ENCODE measurements at regions of chr10 and their contacts with region 1.

Region 1: DNA sequence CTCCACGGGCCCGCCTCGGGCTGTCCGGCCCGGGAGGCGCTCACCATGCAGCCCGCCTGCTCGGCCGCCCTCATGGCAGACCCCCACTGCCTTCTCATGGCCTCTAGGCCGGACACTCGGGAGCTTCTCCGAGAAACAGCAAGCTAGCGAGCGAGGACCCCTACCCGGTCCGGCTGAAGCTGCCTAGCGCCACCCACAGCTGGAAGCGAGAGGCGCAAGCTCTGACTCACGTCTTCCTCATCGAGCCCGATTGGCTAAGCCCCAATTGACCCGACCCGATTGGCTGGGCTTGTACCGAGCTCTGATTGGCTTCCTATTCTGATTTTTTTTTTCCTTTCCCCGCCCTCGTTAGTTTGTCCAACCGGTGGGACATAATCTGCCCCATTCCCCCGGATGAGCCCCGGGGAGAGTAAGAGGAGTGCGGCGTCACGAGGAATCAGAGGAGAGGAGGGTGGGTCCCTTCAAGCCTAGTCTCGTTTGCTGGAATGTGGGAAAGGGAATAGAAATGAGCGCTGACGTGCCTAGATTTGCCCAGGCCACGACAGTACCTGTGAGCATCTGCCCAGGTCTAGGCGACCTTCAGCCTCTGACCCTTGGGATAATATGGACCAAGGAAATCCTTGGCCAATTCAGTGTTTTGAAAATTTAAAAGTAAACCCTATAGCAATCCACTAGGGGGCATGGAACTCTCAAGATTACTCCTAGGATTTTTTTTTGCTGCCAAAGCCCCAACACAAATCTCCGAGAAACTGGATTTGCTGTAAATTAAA is at the start of gene TYSND1:
- DNase-seq: peak; percentile 97
- ATAC-seq: peak; percentile 92
- H3K4me3 Mint-ChIP-seq: peak within 1 kb of the TSS; percentile 83
- H3K27ac Mint-ChIP-seq: peak within 1 kb of the TSS; percentile 93
- H3K4me1 Mint-ChIP-seq: peaks cover 32% of the 10 kb centered on the region
- H3K27me3 Mint-ChIP-seq: no peaks in the 10 kb centered on the region
- total RNA-seq, gene TYSND1: 11.5 to 14.9 TPM

Region 2: GRCh38 chr10:70115948-70116682 is 30.6 kb before region 1 on chr10:
- CTCF ChIA-PET with region 1: interaction called, 20 read pairs
- POLR2A ChIA-PET with region 1: no interaction called
- intact Hi-C with region 1: loop called in 1 of 2 experiments (anchors 1 kb)
- DNase-seq: peak; percentile 71
- ATAC-seq: peak; percentile 88
- H3K4me3 Mint-ChIP-seq: no peak overlapping the region
- H3K27ac Mint-ChIP-seq: no peak overlapping the region
- H3K4me1 Mint-ChIP-seq: peaks cover 4% of the 10 kb centered on the region
- H3K27me3 Mint-ChIP-seq: no peaks in the 10 kb centered on the region

Region 3: DNA sequence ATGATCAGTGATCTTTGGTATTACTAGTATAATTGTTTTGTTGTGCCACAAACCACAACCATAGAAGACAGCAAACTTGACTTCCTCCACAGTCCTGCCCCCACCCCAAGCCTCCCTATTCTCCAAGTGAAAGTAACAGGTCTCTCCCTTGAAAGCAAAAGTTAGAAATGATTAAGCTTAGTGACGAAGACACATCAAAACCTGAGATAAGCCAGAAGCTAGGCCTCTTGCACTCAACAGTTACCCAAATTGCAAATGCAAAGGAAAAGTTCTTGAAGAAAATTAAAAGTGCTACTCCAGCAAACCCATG is 16.2 kb after region 1 on chr10:
- CTCF ChIA-PET with region 1: interaction called, 74 read pairs
- POLR2A ChIA-PET with region 1: interaction called, 18 read pairs
- intact Hi-C with region 1: loop called (anchors 1 kb)
- DNase-seq: peak; percentile 84
- ATAC-seq: peak; percentile 87
- H3K4me3 Mint-ChIP-seq: peak overlapping the region; percentile 60
- H3K27ac Mint-ChIP-seq: peak overlapping the region; percentile 90
- H3K4me1 Mint-ChIP-seq: peaks cover 74% of the 10 kb centered on the region
- H3K27me3 Mint-ChIP-seq: no peaks in the 10 kb centered on the region

Region 4: DNA sequence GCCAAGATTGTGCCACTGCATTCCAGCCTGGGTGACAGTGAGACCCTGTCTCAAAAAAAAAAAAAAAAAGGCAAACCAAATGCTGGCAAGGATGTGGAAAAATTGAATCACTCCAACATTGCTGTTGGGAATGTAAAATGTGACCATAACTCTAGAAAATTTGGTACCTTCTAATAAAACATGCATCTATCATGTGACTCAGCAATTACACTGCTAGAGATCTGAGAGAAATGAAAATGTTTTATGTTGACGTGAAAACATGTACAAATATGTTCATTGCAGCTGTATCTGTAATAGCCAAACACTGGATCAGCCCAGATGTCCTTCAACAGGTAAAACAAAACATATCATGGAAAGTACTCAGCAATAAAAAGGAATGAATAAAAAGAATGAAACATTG is 54.4 kb after region 1 on chr10:
- CTCF ChIA-PET with region 1: interaction called, 6 read pairs
- POLR2A ChIA-PET with region 1: interaction called, 3 read pairs
- intact Hi-C with region 1: loop called in 1 of 2 experiments (anchors 5 kb)
- DNase-seq: no peak
- ATAC-seq: no peak
- H3K4me3 Mint-ChIP-seq: no peak overlapping the region
- H3K27ac Mint-ChIP-seq: no peak overlapping the region
- H3K4me1 Mint-ChIP-seq: peaks cover 20% of the 10 kb centered on the region
- H3K27me3 Mint-ChIP-seq: no peaks in the 10 kb centered on the region

Region 5: DNA sequence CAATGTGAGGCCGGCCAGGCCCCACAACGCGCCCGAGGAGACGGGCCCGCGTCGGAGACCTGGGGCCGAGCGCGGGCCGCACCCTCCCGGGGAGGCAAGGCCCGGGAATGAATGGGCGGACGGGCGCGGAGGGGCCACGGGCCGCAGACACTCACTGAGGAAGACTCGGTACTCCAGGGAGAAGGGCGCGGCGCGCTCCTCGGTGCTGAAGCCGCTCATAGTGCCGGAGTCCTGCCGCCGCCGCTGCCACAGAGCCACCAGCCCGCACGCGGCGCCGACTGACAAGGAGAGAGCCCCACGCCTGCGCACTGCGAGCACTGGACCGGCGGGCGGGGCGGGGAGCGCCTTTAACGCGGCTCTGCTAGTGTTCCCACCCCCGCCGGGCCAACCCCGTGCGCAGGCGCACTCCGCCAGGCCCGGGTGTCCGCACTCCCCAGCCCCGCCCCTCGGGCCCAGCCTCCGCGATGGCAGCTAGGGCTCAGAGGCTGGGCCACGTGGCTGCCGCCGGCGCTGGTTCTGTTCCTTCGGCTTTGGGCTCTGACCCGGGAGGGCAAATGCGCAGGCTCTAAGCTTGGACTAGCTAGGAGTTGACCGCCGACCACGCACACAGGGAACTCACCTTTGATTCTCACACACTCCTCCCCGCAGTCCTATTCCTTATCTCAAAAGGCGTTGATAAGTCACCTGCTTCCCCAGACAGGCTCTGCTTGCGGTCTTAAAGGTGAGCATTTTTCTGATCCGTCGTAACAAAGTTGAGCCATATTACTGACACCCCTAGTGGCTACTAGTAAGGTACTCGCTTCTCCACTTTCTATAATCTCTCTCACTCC is 86.7 kb after region 1 on chr10 and contains the start of gene PPA1:
- CTCF ChIA-PET with region 1: interaction called, 12 read pairs
- POLR2A ChIA-PET with region 1: interaction called, 7 read pairs
- intact Hi-C with region 1: loop called (anchors 1 kb)
- DNase-seq: peak; percentile 100
- ATAC-seq: peak; percentile 91
- H3K4me3 Mint-ChIP-seq: peak within 1 kb of the TSS; percentile 83
- H3K27ac Mint-ChIP-seq: peak within 1 kb of the TSS; percentile 89
- H3K4me1 Mint-ChIP-seq: peaks cover 31% of the 10 kb centered on the region
- H3K27me3 Mint-ChIP-seq: no peaks in the 10 kb centered on the region
- total RNA-seq, gene PPA1: 286 to 328 TPM

Region 6: GRCh38 chr10:70381471-70382421 is 235.1 kb after region 1 on chr10:
- CTCF ChIA-PET with region 1: interaction called, 3 read pairs
- POLR2A ChIA-PET with region 1: no interaction called
- intact Hi-C with region 1: loop called in 1 of 2 experiments (anchors 1 kb)
- DNase-seq: peak; percentile 61
- ATAC-seq: peak; percentile 47
- H3K4me3 Mint-ChIP-seq: peak overlapping the region; percentile 81
- H3K27ac Mint-ChIP-seq: peak overlapping the region; percentile 33
- H3K4me1 Mint-ChIP-seq: peaks cover 6% of the 10 kb centered on the region
- H3K27me3 Mint-ChIP-seq: peaks cover 3% of the 10 kb centered on the region

Region 7: GRCh38 chr10:70815504-70816219 is 669.0 kb after region 1 on chr10 and contains the start of gene SGPL1:
- CTCF ChIA-PET with region 1: no interaction called
- POLR2A ChIA-PET with region 1: no interaction called
- intact Hi-C with region 1: loop called in 1 of 2 experiments (anchors 5 kb)
- DNase-seq: peak; percentile 92
- ATAC-seq: peak; percentile 82
- H3K4me3 Mint-ChIP-seq: peak within 1 kb of the TSS; percentile 83
- H3K27ac Mint-ChIP-seq: peak within 1 kb of the TSS; percentile 84
- H3K4me1 Mint-ChIP-seq: peaks cover 38% of the 10 kb centered on the region
- H3K27me3 Mint-ChIP-seq: no peaks in the 10 kb centered on the region
- total RNA-seq, gene SGPL1: 33.7 to 48.7 TPM

Measured in activated CD4-positive, alpha-beta T cell treated with anti-CD3 and anti-CD28 coated beads for 36 hours (primary cell).